Panc1 (cell line): ENCODE measurements at regions of chr11 and their contacts with region 1.

Region 1: GRCh38 chr11:14249121-14249963 is 109.6 kb downstream of the RRAS2 start:
- DNase-seq: no peak
- ATAC-seq: peak; percentile 70
- H3K4me3 ChIP-seq: no peak overlapping the region
- H3K27ac ChIP-seq: no peak overlapping the region
- H3K4me1 ChIP-seq: no peaks in the 10 kb centered on the region
- H3K27me3 ChIP-seq: peaks cover 14% of the 10 kb centered on the region
- CTCF ChIP-seq: peak; percentile 90

Region 2: DNA sequence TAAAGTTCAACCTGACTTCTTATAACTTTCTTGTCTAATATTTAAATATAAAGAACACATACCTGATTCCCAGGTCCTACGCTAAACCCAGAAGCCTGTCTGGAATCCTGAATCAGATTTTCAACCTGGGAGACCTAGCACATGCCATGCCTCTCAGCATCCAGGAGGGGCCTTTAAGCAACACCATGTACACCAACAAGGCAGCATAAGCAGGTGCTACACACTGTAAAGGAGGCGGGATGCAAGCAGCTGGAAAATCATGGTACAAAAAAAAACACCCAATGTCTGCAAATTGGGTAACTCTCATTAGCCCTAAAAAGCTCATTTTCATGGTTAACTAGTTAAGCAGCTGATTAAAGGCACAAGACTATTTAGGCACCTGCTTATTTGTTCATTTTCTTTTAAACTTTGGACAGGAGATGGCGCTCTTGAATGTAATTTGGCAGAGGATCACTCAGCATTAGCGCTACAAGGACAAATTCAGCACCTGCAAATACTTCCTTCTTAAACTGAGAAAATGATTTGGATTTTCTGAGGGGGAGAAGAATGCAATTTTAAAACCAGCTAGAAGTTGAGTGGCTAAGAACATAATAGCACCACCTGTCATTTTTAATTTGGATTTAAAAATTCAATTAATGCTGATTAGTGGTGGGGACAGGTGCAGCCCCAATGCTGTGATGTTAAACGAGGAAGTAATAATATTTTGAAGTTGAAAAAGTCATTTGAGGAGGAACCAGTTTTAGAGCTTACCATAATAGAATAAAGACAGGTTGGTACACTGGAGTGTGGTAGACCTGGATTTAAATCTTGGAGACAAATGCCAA is 476.9 kb before region 1 on chr11:
- CTCF ChIA-PET with region 1: interaction called, 3 read pairs
- POLR2A ChIA-PET with region 1: no interaction called
- in situ Hi-C with region 1: no loop called
- intact Hi-C with region 1: loop called (anchors 2 kb)
- DNase-seq: peak; percentile 43
- ATAC-seq: peak; percentile 74; the same call in 1 of the 2 replicates
- H3K4me3 ChIP-seq: no peak overlapping the region
- H3K27ac ChIP-seq: no peak overlapping the region
- H3K4me1 ChIP-seq: no peaks in the 10 kb centered on the region
- H3K27me3 ChIP-seq: 0 out of 2 replicates have a peak, but pooled peaks cover 4% of the 10 kb centered on the region
- CTCF ChIP-seq: peak; percentile 63

Region 3: DNA sequence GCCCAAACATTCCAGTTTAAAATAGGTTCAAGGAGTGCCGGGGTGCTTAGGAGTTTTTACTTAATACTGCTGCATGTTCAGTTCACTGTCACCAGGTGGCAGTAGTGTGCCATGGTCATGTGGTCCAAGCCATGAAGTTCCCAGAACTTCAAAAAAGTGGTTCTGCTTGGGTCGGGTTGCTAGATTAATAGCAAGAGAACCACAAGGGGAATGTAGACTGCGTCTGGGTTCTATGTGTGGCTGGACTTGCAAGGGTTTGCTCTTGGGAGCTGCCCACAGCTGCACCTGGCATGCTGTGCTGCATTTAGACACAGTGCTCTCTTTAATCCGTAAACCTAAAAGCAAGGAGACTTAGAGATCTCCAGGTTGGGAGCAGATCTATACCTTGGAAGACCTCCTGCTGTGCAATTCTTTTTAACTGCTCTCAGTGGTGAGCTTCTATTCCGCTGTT is 293.3 kb before region 1 on chr11:
- CTCF ChIA-PET with region 1: interaction called, 7 read pairs
- POLR2A ChIA-PET with region 1: no interaction called
- in situ Hi-C with region 1: loop called (anchors 25 kb)
- intact Hi-C with region 1: loop called (anchors 1 kb)
- DNase-seq: no peak
- ATAC-seq: peak; percentile 79
- H3K4me3 ChIP-seq: no peak overlapping the region
- H3K27ac ChIP-seq: no peak overlapping the region
- H3K4me1 ChIP-seq: no peaks in the 10 kb centered on the region
- H3K27me3 ChIP-seq: peaks cover 55% of the 10 kb centered on the region
- CTCF ChIP-seq: peak; percentile 88

Region 4: GRCh38 chr11:14125529-14125928 is 123.8 kb before region 1 on chr11:
- CTCF ChIA-PET with region 1: no interaction called
- POLR2A ChIA-PET with region 1: interaction called, 12 read pairs
- in situ Hi-C with region 1: no loop called
- intact Hi-C with region 1: no loop called
- DNase-seq: no peak
- ATAC-seq: no peak
- H3K4me3 ChIP-seq: no peak overlapping the region
- H3K27ac ChIP-seq: no peak overlapping the region
- H3K4me1 ChIP-seq: no peaks in the 10 kb centered on the region
- H3K27me3 ChIP-seq: no peaks in the 10 kb centered on the region
- CTCF ChIP-seq: no peak

Region 5: GRCh38 chr11:14232640-14233039 is 16.7 kb before region 1 on chr11:
- CTCF ChIA-PET with region 1: no interaction called
- POLR2A ChIA-PET with region 1: no interaction called
- in situ Hi-C with region 1: no loop called
- intact Hi-C with region 1: no loop called
- DNase-seq: no peak
- ATAC-seq: peak; percentile 76
- H3K4me3 ChIP-seq: no peak overlapping the region
- H3K27ac ChIP-seq: no peak overlapping the region
- H3K4me1 ChIP-seq: no peaks in the 10 kb centered on the region
- H3K27me3 ChIP-seq: peaks cover 29% of the 10 kb centered on the region
- CTCF ChIP-seq: peak; percentile 79